Naive thymus-derived CD4-positive, alpha-beta T cell (primary cell): ENCODE measurements at regions of chr10 and their contacts with region 1.

Region 1: DNA sequence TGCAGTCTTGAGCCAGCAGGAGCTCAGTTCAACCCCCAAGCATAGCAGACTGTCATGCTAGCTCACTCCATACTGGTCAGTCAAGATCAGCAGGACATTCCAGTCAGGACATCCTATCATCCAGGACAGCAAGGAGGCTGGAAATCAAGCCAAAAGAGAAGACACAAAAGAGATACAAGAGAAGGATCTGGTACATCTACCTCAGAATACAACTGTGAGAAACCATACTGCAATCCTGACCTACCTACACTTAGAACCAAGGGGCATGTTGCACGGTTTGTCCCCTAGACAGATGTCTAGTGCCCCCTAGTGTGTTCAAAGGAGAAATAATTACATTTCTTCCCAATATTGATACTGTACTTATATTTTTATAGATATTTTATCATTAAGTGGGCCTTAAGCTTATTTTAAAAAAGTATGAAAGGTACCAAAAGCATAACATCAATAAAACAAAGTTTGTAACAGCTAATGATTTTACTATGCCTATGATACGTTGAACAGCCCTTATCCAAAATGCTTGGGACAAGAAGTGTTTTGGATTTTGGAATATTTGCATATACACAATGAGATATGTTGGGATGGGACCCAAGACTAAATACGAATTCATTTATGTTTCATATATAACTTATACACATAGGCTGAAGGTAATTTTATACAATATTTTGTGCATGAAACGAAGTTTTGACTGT is 26.7 kb downstream of the ERCC6 start:
- DNase-seq: peak in 6 of 9 donors; percentile 4 to 48 (median 40)
- ATAC-seq: peak; percentile 70
- H3K4me3 ChIP-seq: no peak overlapping the region
- H3K4me3 Mint-ChIP-seq: no peak overlapping the region
- H3K27ac ChIP-seq: no peak overlapping the region
- H3K27ac Mint-ChIP-seq: no peak overlapping the region
- H3K4me1 ChIP-seq: peaks cover 14 to 18% of the 10 kb centered on the region in 2 donors
- H3K4me1 Mint-ChIP-seq: peaks cover 21 to 33% (median 31%) of the 10 kb centered on the region in 7 donors
- H3K27me3 ChIP-seq: peaks cover 0 to 5% of the 10 kb centered on the region in 2 donors
- H3K27me3 Mint-ChIP-seq: peaks cover 0 to 16% (median 12%) of the 10 kb centered on the region in 5 donors

Region 2: GRCh38 chr10:48363617-48364355 is 1148.5 kb before region 1 on chr10:
- CTCF ChIA-PET with region 1: no interaction called
- POLR2A ChIA-PET with region 1: no interaction called
- intact Hi-C with region 1: loop called in 1 of 2 experiments (anchors 5 kb)
- DNase-seq: peak in 6 of 9 donors; percentile 7 to 45 (median 37)
- ATAC-seq: peak; percentile 51
- H3K4me3 ChIP-seq: no peak overlapping the region
- H3K4me3 Mint-ChIP-seq: no peak overlapping the region
- H3K27ac ChIP-seq: no peak overlapping the region
- H3K27ac Mint-ChIP-seq: no peak overlapping the region
- H3K4me1 ChIP-seq: no peaks in the 10 kb centered on the region
- H3K4me1 Mint-ChIP-seq: peaks cover 4 to 59% (median 49%) of the 10 kb centered on the region in 7 donors
- H3K27me3 ChIP-seq: no peaks in the 10 kb centered on the region
- H3K27me3 Mint-ChIP-seq: no peaks in the 10 kb centered on the region

Region 3: DNA sequence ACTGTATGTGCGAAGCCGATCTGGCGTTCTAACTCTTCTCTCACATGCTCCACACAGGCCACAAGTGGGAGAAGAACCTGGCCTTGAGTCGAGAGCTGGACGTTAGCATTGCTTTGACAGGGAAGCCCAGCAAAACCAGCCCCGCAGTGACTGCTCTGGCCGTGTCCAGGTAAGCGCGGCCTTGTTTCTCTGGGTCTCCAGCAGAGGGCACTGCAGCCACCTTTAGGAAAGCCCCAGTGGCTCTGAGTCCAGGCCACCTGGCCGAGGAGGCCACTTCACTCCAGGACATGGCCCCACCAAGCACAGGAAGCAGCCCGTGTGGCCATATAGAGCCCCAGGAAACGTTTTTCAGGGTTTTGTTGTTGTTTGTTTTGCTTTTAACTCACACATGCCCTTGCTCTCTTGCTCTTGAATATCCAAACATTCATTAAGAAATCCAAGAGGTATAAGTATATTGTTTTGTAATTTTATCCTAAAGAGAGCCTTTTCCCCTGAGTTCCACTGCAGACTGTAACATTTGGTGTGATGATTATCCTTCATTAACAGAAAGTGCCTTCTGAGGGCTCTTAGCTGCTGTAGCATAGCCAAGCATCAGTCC is 530.9 kb before region 1 on chr10:
- CTCF ChIA-PET with region 1: no interaction called
- POLR2A ChIA-PET with region 1: no interaction called
- intact Hi-C with region 1: loop called (anchors 1 kb)
- DNase-seq: peak in 2 of 9 donors; percentile 8 to 43
- ATAC-seq: peak; percentile 57
- H3K4me3 ChIP-seq: no peak overlapping the region
- H3K4me3 Mint-ChIP-seq: no peak overlapping the region
- H3K27ac ChIP-seq: no peak overlapping the region
- H3K27ac Mint-ChIP-seq: no peak overlapping the region
- H3K4me1 ChIP-seq: no peaks in the 10 kb centered on the region
- H3K4me1 Mint-ChIP-seq: no peaks in the 10 kb centered on the region
- H3K27me3 ChIP-seq: no peaks in the 10 kb centered on the region
- H3K27me3 Mint-ChIP-seq: no peaks in the 10 kb centered on the region

Region 4: GRCh38 chr10:49407552-49408137 is 104.6 kb before region 1 on chr10:
- CTCF ChIA-PET with region 1: interaction called, 37 read pairs
- POLR2A ChIA-PET with region 1: no interaction called
- intact Hi-C with region 1: loop called (anchors 1 kb)
- DNase-seq: peak; percentile 29 to 72 (median 56)
- ATAC-seq: peak; percentile 74
- H3K4me3 ChIP-seq: no peak overlapping the region
- H3K4me3 Mint-ChIP-seq: no peak overlapping the region
- H3K27ac ChIP-seq: no peak overlapping the region
- H3K27ac Mint-ChIP-seq: peak overlapping the region in 2 of 9 donors; percentile 2 to 22
- H3K4me1 ChIP-seq: no peaks in the 10 kb centered on the region
- H3K4me1 Mint-ChIP-seq: peaks cover 0 to 2% (median 0%) of the 10 kb centered on the region in 7 donors
- H3K27me3 ChIP-seq: no peaks in the 10 kb centered on the region
- H3K27me3 Mint-ChIP-seq: peaks cover 24 to 69% (median 60%) of the 10 kb centered on the region in 5 donors

Region 5: DNA sequence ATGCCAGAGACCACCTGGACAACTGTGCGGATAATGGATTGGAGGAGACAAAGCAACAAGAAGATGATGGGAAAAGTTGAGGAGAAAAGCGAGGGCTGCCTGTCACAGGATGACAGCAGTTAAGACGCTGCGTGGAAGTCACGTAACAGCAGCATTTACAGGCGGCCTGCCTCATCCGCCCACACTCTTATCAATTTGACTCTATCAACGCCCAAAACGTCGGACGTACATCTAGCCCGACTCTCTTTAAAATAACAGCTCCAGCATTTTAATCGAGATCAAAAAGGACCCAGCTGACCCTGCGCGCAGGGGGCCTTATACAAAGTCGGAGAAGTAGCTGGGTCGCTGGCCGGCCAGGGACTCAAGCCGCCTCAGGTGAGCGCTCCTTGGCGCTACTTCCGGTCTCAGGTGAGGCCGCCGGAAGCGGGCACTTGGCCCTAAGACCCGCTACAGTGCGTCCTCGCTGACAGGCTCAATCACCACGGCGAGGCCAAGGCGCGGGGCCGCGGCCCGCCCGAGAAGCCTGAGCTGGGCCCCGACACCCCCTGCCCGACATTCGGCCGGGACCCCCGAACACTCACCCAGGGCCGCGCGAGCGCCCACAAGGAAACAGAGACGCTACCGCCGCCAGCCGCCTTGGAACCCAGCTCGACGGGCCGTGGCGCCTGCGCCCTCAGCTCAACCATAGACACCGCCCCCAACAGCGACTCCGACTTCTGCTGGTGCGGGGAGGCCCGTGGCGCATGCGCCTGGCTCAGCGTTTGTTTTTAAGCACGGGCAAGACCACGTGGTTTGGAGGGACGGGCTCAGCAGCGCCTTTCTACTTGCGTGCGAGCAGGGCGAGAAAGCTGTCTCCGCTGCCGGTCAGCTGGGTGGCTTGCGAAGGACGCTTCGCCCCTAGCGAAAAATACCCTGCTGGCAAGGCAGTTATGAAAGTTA is 26.4 kb after region 1 on chr10 and contains the start of gene ERCC6:
- CTCF ChIA-PET with region 1: no interaction called
- POLR2A ChIA-PET with region 1: no interaction called
- intact Hi-C with region 1: loop called (anchors 1 kb)
- DNase-seq: peak; percentile 89 to 95 (median 93)
- ATAC-seq: peak; percentile 97
- H3K4me3 ChIP-seq: peak within 1 kb of the TSS; percentile 81
- H3K4me3 Mint-ChIP-seq: peak within 1 kb of the TSS; percentile 89 to 98 (median 93)
- H3K27ac ChIP-seq: peak within 1 kb of the TSS; percentile 77
- H3K27ac Mint-ChIP-seq: peak within 1 kb of the TSS; percentile 89 to 98 (median 93)
- H3K4me1 ChIP-seq: peaks cover 10 to 14% of the 10 kb centered on the region in 2 donors
- H3K4me1 Mint-ChIP-seq: peaks cover 32 to 52% (median 45%) of the 10 kb centered on the region in 7 donors
- H3K27me3 ChIP-seq: no peaks in the 10 kb centered on the region
- H3K27me3 Mint-ChIP-seq: peaks cover 2 to 25% (median 16%) of the 10 kb centered on the region in 5 donors
- total RNA-seq, gene ERCC6: 23.0 to 50.7 (median 45.2) TPM